ENCODE measurements at regions of chr11 and their contacts with region 1.

Region 1: GRCh38 chr11:76551400-76551799 is 106.6 kb downstream of the EMSY start:
- DNase-seq: no peak
- H3K4me3 ChIP-seq: no peak overlapping the region
- H3K27ac ChIP-seq: no peak overlapping the region
- H3K4me1 ChIP-seq: no peaks in the 10 kb centered on the region
- H3K27me3 ChIP-seq: no peaks in the 10 kb centered on the region
- CTCF ChIP-seq: peak in 1 of 3 experiments; percentile 30
- EP300 ChIP-seq: no peak
- POLR2A ChIP-seq: no peak

Region 2: GRCh38 chr11:76680518-76681425 is 129.4 kb after region 1 on chr11:
- intact Hi-C with region 1: loop called (anchors 5 kb)
- DNase-seq: no peak
- H3K4me3 ChIP-seq: peak overlapping the region in 2 of 4 donors; percentile 13 to 27
- H3K27ac ChIP-seq: no peak overlapping the region
- H3K4me1 ChIP-seq: peaks cover 7 to 16% (median 15%) of the 10 kb centered on the region in 4 donors
- H3K27me3 ChIP-seq: no peaks in the 10 kb centered on the region
- CTCF ChIP-seq: peak; percentile 78 to 87 (median 81)
- EP300 ChIP-seq: no peak
- POLR2A ChIP-seq: no peak

Measured in esophagus muscularis mucosa (tissue), 4 donors.